ENCODE measurements at regions of chr4 and their contacts with region 1.

Region 1: DNA sequence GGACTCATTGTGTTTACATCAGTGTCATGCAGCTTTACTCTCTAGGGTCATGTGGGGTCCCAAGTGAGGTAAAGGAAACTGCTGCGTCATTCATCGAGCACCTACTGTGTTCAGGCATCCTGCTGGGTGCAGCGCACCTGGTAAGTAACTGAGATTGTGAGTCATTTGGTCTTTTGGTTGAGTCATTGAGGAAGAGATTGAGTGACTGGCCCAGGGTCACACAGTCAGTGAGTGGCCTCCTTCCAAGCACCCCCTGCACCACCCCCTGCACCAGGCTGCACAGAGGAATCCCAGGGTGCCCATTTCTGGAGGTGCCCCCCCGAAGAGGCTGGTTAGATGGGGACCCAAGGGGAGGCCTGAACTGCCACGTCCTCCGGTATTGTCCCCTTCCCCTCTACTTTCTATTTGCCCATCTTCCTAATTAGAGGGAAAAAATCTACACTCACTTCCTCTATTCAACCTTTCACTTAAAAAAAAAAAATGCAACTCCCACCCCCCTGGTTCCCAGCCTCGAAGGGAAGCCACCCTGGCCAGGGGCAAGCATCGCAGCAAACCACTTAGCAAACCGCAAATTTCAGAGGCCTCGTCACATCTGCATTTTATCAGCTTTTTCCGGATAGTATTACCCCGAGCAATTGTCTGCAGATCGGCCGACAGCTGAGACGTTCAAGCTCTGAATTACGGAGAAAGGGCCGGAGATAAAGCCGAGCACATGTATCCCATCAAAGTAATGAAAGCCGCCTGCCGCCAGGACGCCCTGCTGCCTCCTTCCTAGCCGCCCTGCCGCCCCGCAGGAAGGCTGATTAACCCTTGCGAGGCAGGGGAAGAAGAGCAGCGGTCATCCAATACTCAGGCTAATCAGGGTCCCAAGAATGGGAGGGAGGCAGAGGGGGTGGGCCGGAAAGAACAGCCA is 96.3 kb upstream of the MSX1 start:
- DNase-seq: no peak
- H3K4me3 ChIP-seq: no peak overlapping the region
- H3K27ac ChIP-seq: no peak overlapping the region
- H3K27me3 ChIP-seq: no peaks in the 10 kb centered on the region
- CTCF ChIP-seq: no peak

Region 2: DNA sequence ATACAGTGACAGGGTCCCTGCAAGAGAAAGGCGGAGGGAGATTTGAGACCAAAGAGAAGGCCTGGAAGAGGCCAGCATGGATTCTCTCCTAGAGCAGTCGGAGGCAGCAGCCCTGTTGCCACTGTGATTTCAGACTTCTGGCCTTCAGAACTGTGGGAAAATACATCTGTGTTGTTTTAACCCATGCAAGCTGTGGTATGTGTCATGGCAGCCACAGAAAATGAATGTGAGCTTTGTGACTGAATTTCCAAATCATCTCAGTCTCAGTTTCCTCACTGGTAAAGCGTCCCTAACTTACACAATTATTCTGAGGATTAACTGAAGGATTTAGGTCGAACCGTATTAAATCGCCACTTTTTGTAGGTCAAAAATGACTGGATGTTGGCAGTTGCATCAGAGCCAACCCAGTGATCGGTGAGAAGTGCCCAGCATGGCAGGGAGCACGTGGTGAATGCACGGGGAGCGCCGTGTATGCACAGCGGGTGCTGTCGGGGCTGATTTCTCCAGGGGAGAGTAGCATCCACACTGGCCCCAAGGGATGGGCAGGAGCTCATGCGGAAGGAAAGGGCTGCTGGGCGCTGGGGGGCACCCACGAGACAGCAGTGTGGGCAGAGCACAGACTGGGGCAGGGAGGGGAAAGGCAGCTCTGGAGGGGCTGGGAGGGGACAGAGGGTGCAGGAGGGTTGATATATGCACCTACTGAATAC is 400.0 kb before region 1 on chr4:
- intact Hi-C with region 1: no loop called
- DNase-seq: no peak
- H3K4me3 ChIP-seq: no peak overlapping the region
- H3K27ac ChIP-seq: no peak overlapping the region
- H3K27me3 ChIP-seq: peaks cover 0 to 17% (median 0%) of the 10 kb centered on the region in 45 donors
- CTCF ChIP-seq: no peak

Region 3: DNA sequence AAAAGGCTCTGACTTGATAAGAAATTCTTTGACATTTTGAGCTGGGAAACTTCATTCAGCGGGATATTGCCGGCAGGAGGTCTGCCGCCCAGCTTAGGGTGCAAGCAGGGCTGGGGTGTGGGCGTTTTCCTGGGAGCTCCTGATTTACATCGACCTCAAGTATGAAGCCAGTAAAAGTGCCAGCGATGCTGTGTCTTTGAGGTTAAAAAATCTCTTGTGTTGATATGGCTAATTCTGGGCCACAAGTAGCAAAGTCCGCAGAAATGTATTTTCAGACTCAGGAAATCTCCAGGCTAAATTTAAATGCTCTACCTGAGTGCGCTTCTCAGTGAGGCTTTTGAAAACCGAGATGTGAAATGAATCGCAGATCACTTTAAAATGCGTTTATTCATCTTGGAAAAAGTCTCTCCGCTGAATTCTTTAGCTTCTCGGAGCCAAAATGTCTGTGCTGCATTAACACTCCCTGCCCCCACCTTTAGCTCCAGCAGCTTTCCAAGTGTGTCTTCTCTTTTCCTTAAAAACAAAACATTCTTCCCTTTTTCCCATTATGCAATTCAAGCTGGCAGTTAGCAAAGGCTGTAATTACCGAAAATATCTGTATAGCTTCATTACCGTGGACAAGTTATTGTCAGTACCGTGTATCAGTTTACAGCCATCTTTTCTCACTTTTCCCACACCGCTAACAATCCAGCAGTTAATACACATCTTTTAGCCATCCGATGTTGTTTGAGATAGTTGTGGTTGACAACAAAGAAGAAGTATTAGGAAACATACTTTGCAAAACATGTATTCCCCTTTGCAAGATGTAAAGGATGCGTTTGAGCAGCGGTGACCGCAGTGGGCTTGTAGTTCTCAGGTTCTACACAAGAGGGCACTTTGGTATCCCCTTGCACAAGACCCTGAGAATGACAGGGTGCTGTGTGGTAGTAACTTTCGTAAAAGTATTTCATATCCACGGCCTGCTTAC is 85.3 kb before region 1 on chr4:
- intact Hi-C with region 1: loop called in 1 of 2 experiments (anchors 10 kb)
- DNase-seq: peak in 2 of 10 donors; percentile 41 to 46
- H3K4me3 ChIP-seq: peak overlapping the region in 41 of 59 donors; percentile 2 to 55 (median 28)
- H3K27ac ChIP-seq: no peak overlapping the region
- H3K27me3 ChIP-seq: no peaks in the 10 kb centered on the region
- CTCF ChIP-seq: peak in 55 of 56 donors; percentile 40 to 76 (median 60)

Region 4: DNA sequence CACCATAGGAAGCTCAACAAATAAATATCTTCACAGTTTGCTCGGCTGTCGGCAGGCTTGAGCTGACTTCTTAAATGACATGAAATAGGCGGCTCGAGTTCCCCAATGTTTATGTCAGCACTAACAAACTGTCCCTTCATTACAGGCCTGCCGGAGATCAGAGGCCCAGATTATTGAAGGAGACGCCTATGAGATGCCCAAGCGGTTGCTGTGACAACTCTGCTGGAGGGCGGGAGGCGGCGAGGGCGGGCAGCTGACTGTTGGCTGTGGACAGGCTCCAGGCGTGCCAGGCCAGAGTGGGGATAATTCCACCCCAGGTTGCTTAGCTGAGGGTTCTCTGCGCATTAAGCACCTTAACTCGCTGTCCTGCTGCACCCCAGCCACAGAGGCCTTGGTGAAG is 57.1 kb after region 1 on chr4:
- intact Hi-C with region 1: loop called in 1 of 2 experiments (anchors 2 kb)
- DNase-seq: peak; percentile 22 to 88 (median 80)
- H3K4me3 ChIP-seq: peak overlapping the region in 1 of 59 donors; percentile 33
- H3K27ac ChIP-seq: peak overlapping the region in 53 of 59 donors; percentile 1 to 89 (median 68)
- H3K27me3 ChIP-seq: no peaks in the 10 kb centered on the region
- CTCF ChIP-seq: peak in 22 of 56 donors; percentile 10 to 49 (median 18)

Region 5: DNA sequence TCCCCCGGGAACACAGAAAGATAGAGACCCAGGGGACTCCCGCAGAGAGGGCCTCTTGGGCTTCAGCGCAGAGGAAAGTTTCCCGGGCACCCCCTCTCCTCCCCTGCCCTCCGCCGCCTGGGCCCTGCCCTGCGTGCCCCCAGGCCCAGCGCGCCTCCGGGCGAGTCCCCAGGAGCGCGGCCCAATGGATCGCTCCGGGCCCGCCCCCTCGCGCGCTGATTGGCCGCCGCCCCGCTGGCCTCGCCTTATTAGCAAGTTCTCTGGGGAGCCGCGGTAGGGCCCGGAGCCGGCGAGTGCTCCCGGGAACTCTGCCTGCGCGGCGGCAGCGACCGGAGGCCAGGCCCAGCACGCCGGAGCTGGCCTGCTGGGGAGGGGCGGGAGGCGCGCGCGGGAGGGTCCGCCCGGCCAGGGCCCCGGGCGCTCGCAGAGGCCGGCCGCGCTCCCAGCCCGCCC is 96.3 kb after region 1 on chr4 and contains the start of gene MSX1:
- intact Hi-C with region 1: loop called in 1 of 2 experiments (anchors 5 kb)
- DNase-seq: peak; percentile 52 to 87 (median 78)
- H3K4me3 ChIP-seq: peak within 1 kb of the TSS; percentile 50 to 81 (median 67)
- H3K27ac ChIP-seq: peak within 1 kb of the TSS in 39 of 59 donors; percentile 2 to 88 (median 59)
- H3K27me3 ChIP-seq: peaks cover 10 to 100% (median 91%) of the 10 kb centered on the region in 45 donors
- CTCF ChIP-seq: peak in 2 of 56 donors; percentile 13 to 20
- total RNA-seq, gene MSX1: 1.9 to 28.3 (median 6.8) TPM

Measured in dorsolateral prefrontal cortex (tissue), 120 donors.